Motor neuron (in vitro differentiated cells): ENCODE measurements at regions of chr21 and their contacts with region 1.

Region 1: GRCh38 chr21:29114765-29115164 is 15.7 kb upstream of the MAP3K7CL start:
- ATAC-seq: peak in 3 of 8 experiments; percentile 33 to 96 (median 90)
- H3K4me3 ChIP-seq: no peak overlapping the region
- H3K27ac ChIP-seq: no peak overlapping the region
- H3K4me1 ChIP-seq: no peaks in the 10 kb centered on the region

Region 2: DNA sequence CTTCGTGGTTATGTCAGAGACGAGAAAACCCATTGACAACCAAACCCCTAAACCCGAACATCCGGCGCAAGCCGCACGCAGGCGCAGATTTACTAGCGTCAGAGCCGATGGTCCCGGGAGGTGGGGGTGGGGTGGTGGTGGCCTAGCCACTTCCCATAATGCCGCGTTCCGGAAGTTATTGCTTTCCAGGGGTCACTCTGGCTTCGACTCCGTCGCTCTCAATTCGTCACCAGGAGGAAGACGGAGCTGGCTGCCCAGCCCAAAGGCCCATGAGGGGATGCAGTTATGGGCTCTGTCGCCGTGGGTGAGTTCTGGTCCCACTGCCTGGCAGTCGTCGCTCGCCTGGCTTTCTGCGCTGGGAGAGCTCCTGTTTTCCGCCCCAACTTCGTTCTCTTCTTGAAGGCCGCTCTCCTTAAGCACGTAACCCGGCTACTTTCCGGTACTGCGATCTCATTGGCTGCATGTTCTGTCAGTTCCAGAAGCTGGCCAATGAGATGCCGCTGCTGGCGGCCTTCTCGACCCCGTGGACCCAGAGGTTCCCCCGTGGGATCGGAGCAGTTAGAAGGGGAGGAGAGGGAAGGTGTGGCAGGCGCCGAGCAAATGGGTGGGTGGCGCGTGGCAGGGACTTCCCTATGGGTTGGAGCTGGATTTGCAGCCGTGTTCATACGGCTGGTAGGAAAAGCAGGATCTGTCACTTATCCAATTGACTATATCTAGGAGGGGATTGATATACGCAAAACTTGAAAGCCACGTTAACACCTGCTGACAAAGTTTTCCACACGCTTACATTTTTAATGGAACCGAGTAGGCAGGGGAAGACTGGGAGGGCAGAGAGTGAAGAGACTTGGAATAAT is 90.1 kb before region 1 on chr21 and contains the start of gene USP16:
- in situ Hi-C with region 1: no loop called
- ATAC-seq: peak; percentile 92 to 99 (median 98)
- H3K4me3 ChIP-seq: peak within 1 kb of the TSS; percentile 59 to 89 (median 80)
- H3K27ac ChIP-seq: peak within 1 kb of the TSS; percentile 97 to 100
- H3K4me1 ChIP-seq: peaks cover 10 to 13% of the 10 kb centered on the region in 2 donors
- total RNA-seq, gene USP16: 21.4 to 41.0 (median 32.7) TPM

Region 3: DNA sequence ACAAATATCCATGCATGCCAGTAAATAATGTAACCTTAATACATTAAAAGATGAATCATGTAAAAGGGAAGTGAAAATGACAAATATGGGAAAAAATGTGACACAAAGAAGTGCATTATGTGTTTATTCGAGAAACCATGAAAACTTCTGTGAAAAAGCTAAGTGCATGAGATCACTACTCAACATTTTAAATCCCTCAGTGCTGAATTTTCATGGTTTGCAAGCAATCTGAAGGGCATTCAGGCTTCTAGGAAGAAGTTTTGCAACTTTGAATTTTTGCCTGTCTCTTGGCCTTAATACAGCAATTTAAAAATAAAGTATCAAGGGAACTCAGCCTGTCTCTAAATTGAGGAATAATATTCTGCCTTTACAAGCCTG is 93.9 kb after region 1 on chr21:
- in situ Hi-C with region 1: no loop called
- ATAC-seq: peak in 3 of 8 experiments; percentile 28 to 80 (median 54)
- H3K4me3 ChIP-seq: no peak overlapping the region
- H3K27ac ChIP-seq: no peak overlapping the region
- H3K4me1 ChIP-seq: no peaks in the 10 kb centered on the region

Region 4: DNA sequence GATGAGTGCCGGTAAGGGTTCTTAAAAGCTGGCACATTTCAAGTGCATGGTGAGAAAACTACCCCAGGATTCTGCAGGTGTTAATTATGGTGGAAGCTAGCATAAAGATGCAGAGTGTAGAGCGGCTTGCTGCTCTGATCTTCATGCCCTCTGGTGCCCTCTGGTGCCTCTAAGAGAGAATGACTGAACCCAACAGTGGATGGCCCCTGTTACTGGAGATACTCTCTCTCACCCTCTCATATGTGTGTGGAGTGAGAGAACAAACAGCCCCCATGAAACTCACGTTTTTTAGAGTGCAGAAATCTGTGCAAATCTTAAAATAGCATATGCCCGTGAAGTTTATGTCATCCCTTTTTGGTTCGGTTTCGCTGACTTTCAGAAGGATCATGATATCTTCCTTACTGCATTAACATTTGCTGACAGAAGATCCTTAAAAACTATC is 735.0 kb after region 1 on chr21:
- in situ Hi-C with region 1: loop called in 1 of 9 experiments (anchors 25 kb)
- ATAC-seq: peak; percentile 72 to 100 (median 88)
- H3K4me3 ChIP-seq: no peak overlapping the region
- H3K27ac ChIP-seq: no peak overlapping the region
- H3K4me1 ChIP-seq: no peaks in the 10 kb centered on the region